Activated CD4-positive, alpha-beta T cell treated with anti-CD3 and anti-CD28 coated beads for 36 hours (primary cell): ENCODE measurements at regions of chr7 and their contacts with region 1.

Region 1: GRCh38 chr7:134126966-134127848 is at the start of gene LRGUK:
- DNase-seq: peak; percentile 89
- ATAC-seq: peak; percentile 100
- H3K4me3 Mint-ChIP-seq: peak within 1 kb of the TSS; percentile 76
- H3K27ac Mint-ChIP-seq: no peak within 1 kb of the TSS
- H3K4me1 Mint-ChIP-seq: peaks cover 16% of the 10 kb centered on the region
- H3K27me3 Mint-ChIP-seq: peaks cover 16% of the 10 kb centered on the region
- total RNA-seq, gene LRGUK: 0.07 to 0.14 TPM

Region 2: DNA sequence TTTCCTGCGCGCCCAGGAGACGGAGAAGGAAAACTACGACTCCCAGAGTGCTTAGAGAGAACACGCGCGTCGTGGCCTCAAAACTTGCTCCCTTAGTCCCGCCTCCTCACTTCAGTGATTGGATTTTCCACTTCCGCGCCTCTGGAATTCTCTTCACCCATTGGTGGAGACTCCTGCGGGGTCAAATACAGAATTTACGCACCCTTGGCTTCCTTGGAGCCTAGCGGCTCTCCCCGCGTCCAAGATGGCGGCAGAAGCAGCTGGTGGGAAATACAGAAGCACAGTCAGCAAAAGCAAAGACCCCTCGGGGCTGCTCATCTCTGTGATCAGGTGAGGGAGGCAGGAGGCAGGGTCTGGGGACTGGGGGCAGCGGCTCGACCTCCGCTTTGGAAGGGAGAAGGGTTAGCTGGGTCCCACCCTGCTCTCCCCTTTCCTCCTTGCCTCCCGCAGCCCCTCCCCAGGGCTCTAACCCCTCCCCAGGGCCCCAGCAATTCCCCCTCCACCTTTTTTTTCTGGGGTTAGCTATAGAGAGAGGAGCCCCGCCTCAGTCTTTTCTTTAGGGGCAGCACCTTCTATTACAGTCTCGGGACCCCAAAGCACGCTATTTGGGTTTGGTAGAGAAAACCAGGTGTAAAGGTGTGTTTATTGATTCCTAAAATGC is 874.2 kb before region 1 on chr7 and contains the start of gene EXOC4:
- CTCF ChIA-PET with region 1: interaction called, 5 read pairs
- POLR2A ChIA-PET with region 1: no interaction called
- intact Hi-C with region 1: loop called (anchors 1 to 10 kb)
- DNase-seq: peak; percentile 92
- ATAC-seq: peak; percentile 100
- H3K4me3 Mint-ChIP-seq: peak within 1 kb of the TSS; percentile 85
- H3K27ac Mint-ChIP-seq: peak within 1 kb of the TSS; percentile 83
- H3K4me1 Mint-ChIP-seq: peaks cover 32% of the 10 kb centered on the region
- H3K27me3 Mint-ChIP-seq: no peaks in the 10 kb centered on the region
- total RNA-seq, gene EXOC4: 51.9 to 90.1 TPM